Calu3 (cell line): ENCODE measurements at regions of chr1 and their contacts with region 1.

Region 1: GRCh38 chr1:202416641-202417040 is 68.1 kb downstream of the PPP1R12B start:
- DNase-seq: no peak
- H3K4me3 Mint-ChIP-seq: no peak overlapping the region
- H3K27ac Mint-ChIP-seq: no peak overlapping the region
- H3K4me1 Mint-ChIP-seq: peaks cover 19% of the 10 kb centered on the region
- H3K27me3 Mint-ChIP-seq: no peaks in the 10 kb centered on the region
- CTCF ChIP-seq: no peak

Region 2: DNA sequence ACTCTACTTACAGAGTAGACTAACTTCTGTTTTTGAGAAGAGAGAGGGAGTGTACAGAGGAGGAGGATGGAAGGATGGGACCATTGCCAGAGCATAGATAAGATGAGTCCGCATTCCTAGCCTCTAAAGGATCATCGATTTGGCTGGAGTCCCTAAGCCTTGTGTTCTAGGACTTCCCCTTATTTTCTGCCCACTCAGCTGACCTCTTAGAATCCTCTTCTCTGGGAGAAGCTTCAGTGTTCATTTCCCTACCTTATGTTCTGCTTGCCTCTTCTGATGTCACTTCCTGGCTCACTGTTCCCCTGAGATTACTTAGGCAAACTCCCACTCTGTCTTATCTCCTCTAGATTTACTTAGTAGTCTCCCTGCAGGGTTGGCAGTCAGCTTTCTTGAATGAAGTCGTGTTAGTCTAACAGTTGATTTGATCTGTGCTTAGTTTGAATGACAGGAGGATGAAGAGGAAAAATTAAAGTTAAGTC is 137.0 kb after region 1 on chr1:
- CTCF ChIA-PET with region 1: no interaction called
- intact Hi-C with region 1: no loop called
- DNase-seq: no peak
- H3K4me3 Mint-ChIP-seq: no peak overlapping the region
- H3K27ac Mint-ChIP-seq: no peak overlapping the region
- H3K4me1 Mint-ChIP-seq: peaks cover 10% of the 10 kb centered on the region
- H3K27me3 Mint-ChIP-seq: no peaks in the 10 kb centered on the region
- CTCF ChIP-seq: no peak

Region 3: GRCh38 chr1:203320591-203321272 is 904.1 kb after region 1 on chr1:
- CTCF ChIA-PET with region 1: no interaction called
- intact Hi-C with region 1: loop called (anchors 5 kb)
- DNase-seq: no peak
- H3K4me3 Mint-ChIP-seq: no peak overlapping the region
- H3K27ac Mint-ChIP-seq: no peak overlapping the region
- H3K4me1 Mint-ChIP-seq: peaks cover 11% of the 10 kb centered on the region
- H3K27me3 Mint-ChIP-seq: peaks cover 97% of the 10 kb centered on the region
- CTCF ChIP-seq: no peak